Motor neuron (in vitro differentiated cells): ENCODE measurements at regions of chr12 and their contacts with region 1.

Region 1: DNA sequence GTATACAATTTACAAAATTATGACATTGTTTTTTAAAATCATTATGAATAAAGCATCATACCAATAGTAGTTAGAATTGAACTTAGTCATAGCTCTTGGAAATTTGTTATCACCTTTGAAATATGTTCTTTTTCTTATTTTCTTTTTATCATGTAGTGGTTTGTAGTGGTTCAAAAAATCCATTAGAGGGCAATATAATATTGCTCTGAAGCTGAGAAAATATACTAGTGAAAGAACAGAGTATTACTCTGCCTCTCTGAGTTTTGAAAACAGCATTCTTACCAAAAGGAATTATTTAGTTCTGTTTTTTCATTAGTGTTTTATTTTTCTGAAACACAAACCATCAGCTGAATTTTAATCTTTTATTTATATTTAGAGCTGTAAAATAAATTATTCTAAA is 76.2 kb downstream of the PDZRN4 start:
- ATAC-seq: peak in 2 of 8 experiments; percentile 34 to 54
- H3K4me3 ChIP-seq: no peak overlapping the region
- H3K27ac ChIP-seq: no peak overlapping the region
- H3K4me1 ChIP-seq: peaks cover 0 to 3% of the 10 kb centered on the region in 2 donors

Region 2: GRCh38 chr12:41151793-41152192 is 112.5 kb before region 1 on chr12:
- in situ Hi-C with region 1: no loop called
- ATAC-seq: peak in 3 of 8 experiments; percentile 54 to 84 (median 65)
- H3K4me3 ChIP-seq: no peak overlapping the region
- H3K27ac ChIP-seq: no peak overlapping the region
- H3K4me1 ChIP-seq: no peaks in the 10 kb centered on the region

Region 3: GRCh38 chr12:42325653-42326474 is 1061.6 kb after region 1 on chr12 and contains the starts of genes PPHLN1 and ZCRB1:
- in situ Hi-C with region 1: loop called in 2 of 9 experiments (anchors 25 kb)
- ATAC-seq: peak; percentile 92 to 99 (median 96)
- H3K4me3 ChIP-seq: peak within 1 kb of the TSS; percentile 56 to 98 (median 79)
- H3K27ac ChIP-seq: peak within 1 kb of the TSS; percentile 53 to 87
- H3K4me1 ChIP-seq: peaks cover 8 to 17% of the 10 kb centered on the region in 2 donors
- total RNA-seq, gene PPHLN1: 42.8 to 99.0 (median 66.7) TPM
- total RNA-seq, gene ZCRB1: 34.1 to 70.0 (median 44.1) TPM